ENCODE measurements at regions of chr17 and their contacts with region 1.

Region 1: GRCh38 chr17:2354311-2354710 is 17.0 kb downstream of the SGSM2 start:
- DNase-seq: no peak
- ATAC-seq: no peak
- H3K4me3 ChIP-seq: no peak overlapping the region
- H3K27ac ChIP-seq: no peak overlapping the region
- H3K4me1 ChIP-seq: peaks cover 15% of the 10 kb centered on the region
- CTCF ChIP-seq: no peak
- EP300 ChIP-seq: no peak
- POLR2A ChIP-seq: no peak
- RAD21 ChIP-seq: no peak

Region 2: DNA sequence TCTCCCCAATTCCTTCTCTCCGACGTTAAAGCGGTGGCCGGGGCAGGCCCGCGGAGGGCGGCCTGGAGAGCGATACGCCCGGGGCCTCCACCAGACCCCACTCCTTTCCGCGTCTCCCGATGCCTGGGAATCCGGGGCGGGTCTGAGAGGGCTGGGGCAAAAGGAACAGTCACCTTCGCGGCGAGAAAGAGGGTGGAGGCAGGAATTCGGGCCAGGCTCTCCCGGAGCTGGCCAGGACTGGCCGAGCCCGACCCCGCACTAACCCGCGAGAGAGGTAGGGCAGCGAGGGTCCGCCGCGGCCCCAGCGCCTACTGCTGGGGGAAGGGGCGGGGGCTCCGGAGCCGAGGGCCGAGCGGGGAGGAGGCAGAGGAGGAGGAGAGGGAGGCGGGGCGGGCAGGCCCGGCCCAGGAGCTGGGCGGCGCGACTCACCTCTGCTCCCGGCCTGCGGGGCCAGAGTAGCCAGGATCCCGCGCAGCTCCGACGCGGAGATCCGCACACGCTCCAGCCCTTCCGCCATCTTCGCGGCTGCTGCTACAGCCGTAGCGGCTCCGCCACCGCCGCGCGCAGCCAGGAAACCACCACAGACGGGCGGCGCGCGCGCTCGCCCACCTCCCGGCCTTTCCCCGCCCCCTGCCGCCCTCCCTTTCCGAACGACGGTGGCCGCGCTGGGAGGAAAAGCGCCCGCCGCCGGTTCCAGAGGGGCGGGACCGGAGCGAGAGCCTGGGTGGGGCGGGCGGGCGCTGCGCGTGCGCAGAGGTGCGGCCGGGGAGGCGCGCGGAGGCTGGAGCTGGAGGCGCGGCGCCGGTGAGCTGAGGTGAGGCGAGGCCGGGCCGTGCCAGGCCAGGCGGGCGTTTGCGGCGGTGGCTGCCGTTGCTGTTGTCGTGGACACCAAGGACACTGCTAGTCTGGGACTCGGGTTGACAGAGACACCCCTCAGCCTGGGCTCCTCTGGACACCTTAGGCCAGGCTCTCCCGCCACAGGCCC is 50.8 kb before region 1 on chr17 and contains the starts of genes SMG6 and SRR:
- CTCF ChIA-PET with region 1: interaction called, 11 read pairs
- POLR2A ChIA-PET with region 1: no interaction called
- DNase-seq: peak; percentile 92 to 95
- ATAC-seq: peak; percentile 96 to 97
- H3K4me3 ChIP-seq: peak within 1 kb of the TSS; percentile 75
- H3K27ac ChIP-seq: peak within 1 kb of the TSS; percentile 97 to 99
- H3K4me1 ChIP-seq: peaks cover 13% of the 10 kb centered on the region; the same call in 2 of the 3 replicates
- CTCF ChIP-seq: no peak
- EP300 ChIP-seq: no peak
- POLR2A ChIP-seq: peak; percentile 86
- RAD21 ChIP-seq: no peak
- polyA plus RNA-seq, gene SMG6: 4.7 and 13.1 TPM in 2 replicates
- polyA plus RNA-seq, gene SRR: 13.2 and 16.2 TPM in 2 replicates

Region 3: DNA sequence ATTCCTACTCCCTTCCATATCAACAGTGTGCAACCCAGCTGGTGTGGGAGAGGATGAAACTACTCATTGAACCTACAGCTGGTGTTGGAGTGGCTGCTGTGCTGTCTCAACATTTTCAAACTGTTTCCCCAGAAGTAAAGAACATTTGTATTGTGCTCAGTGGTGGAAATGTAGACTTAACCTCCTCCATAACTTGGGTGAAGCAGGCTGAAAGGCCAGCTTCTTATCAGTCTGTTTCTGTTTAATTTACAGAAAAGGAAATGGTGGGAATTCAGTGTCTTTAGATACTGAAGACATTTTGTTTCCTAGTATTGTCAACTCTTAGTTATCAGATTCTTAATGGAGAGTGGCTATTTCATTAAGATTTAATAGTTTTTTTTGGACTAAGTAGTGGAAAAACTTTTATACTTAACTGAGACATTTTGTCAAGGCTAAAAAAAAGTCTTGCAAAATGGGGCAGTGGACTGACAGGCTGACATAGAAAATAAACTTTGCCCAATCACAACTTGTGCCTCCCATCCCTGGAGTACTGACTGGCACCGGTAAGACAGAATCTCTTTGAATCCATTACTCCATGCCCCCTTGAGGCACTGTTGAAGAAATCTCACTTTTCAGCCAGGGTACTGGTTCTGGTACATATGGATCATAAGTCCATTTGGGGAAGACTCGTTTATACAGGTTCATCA is 30.5 kb before region 1 on chr17:
- CTCF ChIA-PET with region 1: interaction called, 17 read pairs
- POLR2A ChIA-PET with region 1: no interaction called
- DNase-seq: no peak
- ATAC-seq: no peak
- H3K4me3 ChIP-seq: no peak overlapping the region
- H3K27ac ChIP-seq: no peak overlapping the region
- H3K4me1 ChIP-seq: no peaks in the 10 kb centered on the region
- CTCF ChIP-seq: no peak
- EP300 ChIP-seq: no peak
- POLR2A ChIP-seq: no peak
- RAD21 ChIP-seq: no peak

Region 4: DNA sequence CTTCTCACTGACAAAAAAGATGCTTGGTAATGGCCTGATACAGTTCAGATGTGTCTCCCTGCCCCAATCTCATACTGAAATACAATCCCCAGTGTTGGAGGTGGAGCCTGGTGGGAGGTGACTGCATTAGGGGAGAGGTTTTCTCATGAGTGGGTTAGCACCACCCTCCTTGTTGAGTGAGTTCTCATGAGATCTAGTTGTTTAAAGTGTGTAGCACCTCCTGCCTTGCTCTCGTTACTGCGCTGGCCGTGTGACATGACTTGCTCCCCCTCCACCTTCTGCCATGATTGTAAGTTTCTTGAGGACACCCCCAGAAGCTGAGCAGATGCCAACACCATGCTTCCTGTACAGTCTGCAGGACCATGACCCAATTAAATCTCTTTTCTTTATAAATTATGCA is 23.0 kb before region 1 on chr17:
- CTCF ChIA-PET with region 1: interaction called, 79 read pairs
- POLR2A ChIA-PET with region 1: interaction called, 11 read pairs
- DNase-seq: peak in 1 of 2 experiments; percentile 36
- ATAC-seq: peak; percentile 11 to 36; a peak in 3 of 6 replicates
- H3K4me3 ChIP-seq: no peak overlapping the region
- H3K27ac ChIP-seq: no peak overlapping the region
- H3K4me1 ChIP-seq: peaks cover 15% of the 10 kb centered on the region
- CTCF ChIP-seq: no peak
- EP300 ChIP-seq: no peak
- POLR2A ChIP-seq: no peak
- RAD21 ChIP-seq: no peak

Measured in A549 (cell line).